Caco-2 (cell line): ENCODE measurements at regions of chr9 and their contacts with region 1.

Region 1: GRCh38 chr9:105621001-105621400 is 41.3 kb upstream of the TAL2 start:
- DNase-seq: no peak
- H3K4me3 ChIP-seq: no peak overlapping the region
- H3K4me3 Mint-ChIP-seq: no peak overlapping the region
- H3K27ac Mint-ChIP-seq: no peak overlapping the region
- H3K4me1 ChIP-seq: no peaks in the 10 kb centered on the region
- H3K4me1 Mint-ChIP-seq: no peaks in the 10 kb centered on the region
- H3K27me3 ChIP-seq: no peaks in the 10 kb centered on the region
- H3K27me3 Mint-ChIP-seq: no peaks in the 10 kb centered on the region
- CTCF ChIP-seq: no peak

Region 2: DNA sequence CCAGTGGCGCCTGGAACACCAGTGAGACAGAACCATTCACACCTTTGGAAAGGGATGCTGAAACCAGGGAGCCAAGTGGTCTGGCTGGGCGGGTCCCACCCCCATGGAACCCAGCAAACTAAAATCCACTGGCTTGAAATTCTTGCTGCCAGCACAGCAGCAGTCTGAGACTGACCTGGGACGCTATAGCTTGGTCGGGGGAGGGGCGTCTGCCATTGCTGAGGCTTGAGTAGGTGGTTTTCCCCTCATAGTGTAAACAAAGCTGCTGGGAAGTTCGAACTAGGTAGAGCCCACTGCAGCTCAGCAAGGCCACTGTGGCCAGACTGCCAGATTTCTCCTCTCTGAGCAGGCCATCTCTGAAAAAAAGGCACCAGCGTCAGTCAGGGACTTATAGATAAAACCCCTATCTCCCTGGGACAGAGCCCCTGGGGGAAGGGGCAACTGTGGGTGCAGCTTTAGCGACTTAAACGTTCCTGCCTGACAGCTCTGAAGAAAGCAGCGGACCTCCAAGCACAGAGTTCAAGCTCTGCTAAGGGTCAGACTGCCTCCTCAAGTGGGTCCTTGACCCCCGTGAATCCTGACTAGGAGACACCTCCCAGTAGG is 105.1 kb before region 1 on chr9:
- CTCF ChIA-PET with region 1: no interaction called
- POLR2A ChIA-PET with region 1: no interaction called
- intact Hi-C with region 1: no loop called
- DNase-seq: no peak
- H3K4me3 ChIP-seq: no peak overlapping the region
- H3K4me3 Mint-ChIP-seq: no peak overlapping the region
- H3K27ac Mint-ChIP-seq: no peak overlapping the region
- H3K4me1 ChIP-seq: no peaks in the 10 kb centered on the region
- H3K4me1 Mint-ChIP-seq: no peaks in the 10 kb centered on the region
- H3K27me3 ChIP-seq: no peaks in the 10 kb centered on the region
- H3K27me3 Mint-ChIP-seq: no peaks in the 10 kb centered on the region
- CTCF ChIP-seq: no peak

Region 3: GRCh38 chr9:105637787-105638395 is 16.9 kb after region 1 on chr9:
- CTCF ChIA-PET with region 1: no interaction called
- POLR2A ChIA-PET with region 1: interaction called, 11 read pairs
- intact Hi-C with region 1: no loop called
- DNase-seq: no peak
- H3K4me3 ChIP-seq: no peak overlapping the region
- H3K4me3 Mint-ChIP-seq: no peak overlapping the region
- H3K27ac Mint-ChIP-seq: no peak overlapping the region
- H3K4me1 ChIP-seq: no peaks in the 10 kb centered on the region
- H3K4me1 Mint-ChIP-seq: no peaks in the 10 kb centered on the region
- H3K27me3 ChIP-seq: no peaks in the 10 kb centered on the region
- H3K27me3 Mint-ChIP-seq: no peaks in the 10 kb centered on the region
- CTCF ChIP-seq: peak; percentile 42 to 74

Region 4: DNA sequence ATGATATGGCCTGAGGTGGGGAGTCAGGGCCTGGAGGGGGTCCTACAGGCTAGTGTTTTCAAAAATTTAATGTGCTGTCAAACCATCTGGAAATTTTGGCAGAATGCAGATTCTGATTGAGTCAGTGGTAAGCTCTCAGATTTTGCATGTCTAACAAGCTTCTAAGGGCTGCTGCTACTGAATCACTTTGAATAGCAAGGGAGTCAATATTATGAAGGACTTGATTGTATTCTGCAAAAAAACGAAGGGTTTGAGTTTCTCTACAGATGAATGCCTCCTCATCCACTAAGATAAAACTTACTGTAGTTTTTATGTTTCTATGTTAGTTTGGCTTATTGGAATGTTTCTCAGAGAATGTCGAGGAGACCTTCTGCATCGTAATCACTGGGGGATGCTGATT is 252.8 kb after region 1 on chr9:
- CTCF ChIA-PET with region 1: no interaction called
- POLR2A ChIA-PET with region 1: no interaction called
- intact Hi-C with region 1: no loop called
- DNase-seq: no peak
- H3K4me3 ChIP-seq: no peak overlapping the region
- H3K4me3 Mint-ChIP-seq: no peak overlapping the region
- H3K27ac Mint-ChIP-seq: no peak overlapping the region
- H3K4me1 ChIP-seq: no peaks in the 10 kb centered on the region
- H3K4me1 Mint-ChIP-seq: no peaks in the 10 kb centered on the region
- H3K27me3 ChIP-seq: no peaks in the 10 kb centered on the region
- H3K27me3 Mint-ChIP-seq: no peaks in the 10 kb centered on the region
- CTCF ChIP-seq: no peak